GM12878 (cell line): ENCODE measurements at regions of chr10 and their contacts with region 1.

Region 1: DNA sequence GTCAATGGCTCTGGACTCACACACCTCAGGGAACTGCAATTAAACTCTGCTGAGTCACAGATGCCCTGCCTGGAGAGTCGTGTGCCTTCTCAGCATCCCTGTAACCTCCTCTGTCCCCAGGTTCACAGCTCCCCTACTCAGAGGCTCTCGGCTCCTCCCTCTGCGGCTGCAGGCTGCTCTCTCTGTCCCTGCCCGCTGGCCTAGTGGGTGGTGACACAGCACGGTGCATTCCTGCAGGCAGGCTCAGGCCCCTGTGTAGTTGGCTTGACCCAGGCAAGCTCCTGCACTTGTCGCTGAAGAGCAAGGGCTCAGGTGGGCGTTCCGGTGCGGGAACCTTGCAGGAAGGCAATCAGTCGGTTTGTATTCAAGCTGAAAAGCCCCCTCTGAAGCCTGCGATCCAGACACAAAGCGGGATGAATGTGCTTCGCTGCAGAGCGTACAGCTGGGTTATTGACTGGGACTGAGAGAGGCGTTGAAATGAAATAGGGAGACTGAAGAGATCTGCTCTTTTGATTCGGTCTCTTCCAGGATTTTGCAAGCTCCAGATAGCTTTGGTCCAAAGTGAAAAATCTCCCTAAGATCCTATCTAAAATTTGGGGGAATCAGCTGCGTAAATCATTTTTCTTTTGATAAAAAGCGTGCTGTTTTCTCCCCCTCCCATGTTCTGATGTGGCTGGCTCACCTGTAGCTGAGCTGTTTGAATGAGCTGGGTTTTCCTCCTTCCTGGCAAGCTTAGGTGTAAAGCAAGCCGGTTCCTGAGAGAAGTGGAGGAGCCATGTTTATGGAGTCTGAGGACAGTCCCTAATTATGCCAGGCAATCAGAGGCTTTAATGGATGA is 208.7 kb upstream of the PHYHIPL start:
- DNase-seq: no peak
- ATAC-seq: peak; percentile 88
- H3K4me3 ChIP-seq: no peak overlapping the region
- H3K27ac ChIP-seq: no peak overlapping the region
- H3K4me1 ChIP-seq: no peaks in the 10 kb centered on the region
- H3K27me3 ChIP-seq: no peaks in the 10 kb centered on the region
- CTCF ChIP-seq: no peak
- EP300 ChIP-seq: no peak
- POLR2A ChIP-seq: no peak
- RAD21 ChIP-seq: no peak

Region 2: DNA sequence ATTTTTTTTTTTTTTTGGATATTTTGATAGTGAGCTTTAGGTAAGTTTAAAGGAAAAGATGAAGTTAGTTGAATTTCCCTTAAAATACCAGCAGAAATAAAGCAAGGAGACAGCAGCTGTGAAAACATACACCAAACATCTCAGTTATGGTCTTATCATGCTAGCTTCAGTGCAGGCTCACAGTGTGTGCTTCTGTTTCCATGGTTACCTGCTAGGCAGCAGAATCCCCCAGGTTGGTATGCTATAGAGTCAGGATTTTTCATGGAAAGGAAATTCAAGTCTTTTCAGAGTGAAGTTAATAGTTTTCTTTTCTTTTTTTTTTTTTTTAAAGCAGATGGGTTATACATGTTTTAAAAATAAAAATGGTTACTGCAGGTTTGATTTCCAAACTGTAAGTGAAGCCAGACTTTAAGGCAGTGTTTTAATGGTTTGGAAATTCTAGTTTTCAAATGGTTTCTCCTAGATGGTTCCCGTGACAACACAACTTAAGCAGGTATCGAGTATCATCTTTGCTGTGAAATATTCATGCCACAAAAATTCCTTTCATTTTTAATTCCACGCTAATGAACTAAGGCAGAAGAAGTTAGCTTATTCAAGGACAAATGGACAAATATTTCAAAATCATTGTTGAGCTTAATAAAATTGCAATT is 224.2 kb before region 1 on chr10:
- CTCF ChIA-PET with region 1: no interaction called
- POLR2A ChIA-PET with region 1: no interaction called
- RAD21 ChIA-PET with region 1: no interaction called
- SMC1A ChIA-PET with region 1: no interaction called
- in situ Hi-C with region 1: no loop called
- intact Hi-C with region 1: no loop called
- DNase-seq: no peak
- ATAC-seq: no peak
- H3K4me3 ChIP-seq: no peak overlapping the region
- H3K27ac ChIP-seq: no peak overlapping the region
- H3K4me1 ChIP-seq: no peaks in the 10 kb centered on the region
- H3K27me3 ChIP-seq: no peaks in the 10 kb centered on the region
- CTCF ChIP-seq: no peak
- EP300 ChIP-seq: no peak
- POLR2A ChIP-seq: no peak
- RAD21 ChIP-seq: no peak

Region 3: DNA sequence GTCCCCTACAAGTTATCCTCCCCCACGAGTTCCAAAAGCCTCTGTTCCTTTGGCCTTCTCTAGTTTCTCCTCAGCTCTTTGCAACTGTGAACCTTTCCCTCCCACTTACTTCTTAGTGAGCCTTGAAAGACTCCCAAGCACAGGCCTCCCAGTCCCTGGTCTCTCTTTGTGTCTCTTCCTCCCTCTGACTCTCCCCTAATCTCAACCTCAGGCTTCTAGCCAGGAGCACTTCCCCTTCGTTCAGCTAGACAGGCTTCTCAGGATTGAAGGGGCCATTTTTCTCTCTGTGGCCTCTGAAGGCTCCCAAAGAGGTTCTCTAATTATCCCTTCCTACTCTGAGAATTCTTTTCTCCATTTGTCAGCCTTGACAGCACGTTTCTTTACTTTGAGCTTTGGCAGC is 158.5 kb after region 1 on chr10:
- CTCF ChIA-PET with region 1: interaction called, 3 read pairs
- POLR2A ChIA-PET with region 1: no interaction called
- RAD21 ChIA-PET with region 1: no interaction called
- SMC1A ChIA-PET with region 1: interaction called, 10 read pairs
- in situ Hi-C with region 1: no loop called
- intact Hi-C with region 1: no loop called
- DNase-seq: no peak
- ATAC-seq: peak; percentile 53
- H3K4me3 ChIP-seq: no peak overlapping the region
- H3K27ac ChIP-seq: no peak overlapping the region
- H3K4me1 ChIP-seq: no peaks in the 10 kb centered on the region; the same call in 1 of the 2 replicates
- H3K27me3 ChIP-seq: no peaks in the 10 kb centered on the region
- CTCF ChIP-seq: no peak
- EP300 ChIP-seq: no peak
- POLR2A ChIP-seq: no peak
- RAD21 ChIP-seq: no peak